ENCODE measurements at regions of chr17 and their contacts with region 1.

Region 1: GRCh38 chr17:68035523-68036303 is at the start of gene KPNA2:
- DNase-seq: peak; percentile 70 to 95 (median 91)
- ATAC-seq: peak; percentile 94
- H3K4me3 ChIP-seq: peak within 1 kb of the TSS; percentile 71
- H3K4me3 Mint-ChIP-seq: peak within 1 kb of the TSS; percentile 83 to 97 (median 91)
- H3K27ac ChIP-seq: peak within 1 kb of the TSS; percentile 91
- H3K27ac Mint-ChIP-seq: peak within 1 kb of the TSS; percentile 83 to 97 (median 92)
- H3K4me1 ChIP-seq: peaks cover 8 to 16% of the 10 kb centered on the region in 2 donors
- H3K4me1 Mint-ChIP-seq: peaks cover 6 to 32% (median 15%) of the 10 kb centered on the region in 7 donors
- H3K27me3 ChIP-seq: no peaks in the 10 kb centered on the region
- H3K27me3 Mint-ChIP-seq: peaks cover 0 to 3% (median 0%) of the 10 kb centered on the region in 5 donors
- total RNA-seq, gene KPNA2: 8.4 to 161 (median 45.9) TPM

Region 2: GRCh38 chr17:67717624-67718329 is 317.9 kb before region 1 on chr17 and contains the start of gene NOL11:
- CTCF ChIA-PET with region 1: no interaction called
- POLR2A ChIA-PET with region 1: no interaction called
- intact Hi-C with region 1: loop called in 1 of 2 experiments (anchors 1 kb)
- DNase-seq: peak; percentile 97 to 100 (median 99)
- ATAC-seq: peak; percentile 98
- H3K4me3 ChIP-seq: peak within 1 kb of the TSS; percentile 96
- H3K4me3 Mint-ChIP-seq: peak within 1 kb of the TSS; percentile 95 to 100 (median 100)
- H3K27ac ChIP-seq: peak within 1 kb of the TSS; percentile 95
- H3K27ac Mint-ChIP-seq: peak within 1 kb of the TSS; percentile 96 to 100 (median 99)
- H3K4me1 ChIP-seq: peaks cover 14 to 20% of the 10 kb centered on the region in 2 donors
- H3K4me1 Mint-ChIP-seq: peaks cover 7 to 47% (median 28%) of the 10 kb centered on the region in 7 donors
- H3K27me3 ChIP-seq: no peaks in the 10 kb centered on the region
- H3K27me3 Mint-ChIP-seq: peaks cover 0 to 5% (median 0%) of the 10 kb centered on the region in 5 donors
- total RNA-seq, gene NOL11: 50.0 to 72.9 (median 65.1) TPM

Region 3: DNA sequence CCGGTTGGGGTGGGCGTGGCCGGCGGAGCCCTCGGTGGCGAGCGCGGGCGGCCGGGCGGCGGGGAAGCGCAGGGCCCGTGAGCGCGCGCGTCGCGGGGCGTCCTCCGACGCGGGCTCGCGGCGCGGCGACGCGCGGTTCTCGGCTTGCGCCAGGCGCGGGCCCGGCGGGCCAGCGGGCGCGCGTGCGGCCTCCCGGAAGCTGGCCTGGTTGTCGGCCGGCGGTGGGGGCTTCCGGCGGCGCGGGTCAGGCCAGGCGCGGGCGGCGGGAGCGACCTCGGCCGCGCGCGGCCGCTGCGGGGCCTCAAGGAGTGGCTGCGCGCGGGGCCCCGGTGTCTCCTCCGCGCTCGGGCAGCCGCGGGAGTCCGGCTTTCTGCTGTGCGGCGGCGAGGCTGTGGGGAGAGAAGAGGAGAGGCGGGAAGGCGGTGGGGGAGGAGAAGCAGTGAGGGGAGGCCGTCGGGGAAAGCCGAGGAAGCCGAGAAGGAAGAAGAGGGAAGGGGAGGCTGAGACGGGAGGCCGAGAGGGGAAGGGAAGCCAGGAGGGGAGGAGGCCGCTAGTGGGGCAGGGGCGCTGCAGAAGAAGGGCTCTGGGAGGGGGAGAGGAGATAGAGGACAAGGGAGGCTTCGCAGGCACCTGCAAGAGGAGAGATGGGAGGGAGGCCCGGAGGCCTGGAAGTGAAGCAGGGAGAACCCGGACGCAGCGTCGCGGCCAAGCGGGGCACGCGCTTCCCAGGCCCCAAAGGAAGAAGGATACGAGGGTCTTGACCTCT is 41.9 kb before region 1 on chr17:
- CTCF ChIA-PET with region 1: no interaction called
- POLR2A ChIA-PET with region 1: interaction called, 3 read pairs
- intact Hi-C with region 1: loop called (anchors 1 kb)
- DNase-seq: peak in 3 of 9 donors; percentile 13 to 29 (median 22)
- ATAC-seq: peak; percentile 89
- H3K4me3 ChIP-seq: peak overlapping the region; percentile 50
- H3K4me3 Mint-ChIP-seq: peak overlapping the region; percentile 74 to 95 (median 86)
- H3K27ac ChIP-seq: peak overlapping the region; percentile 51
- H3K27ac Mint-ChIP-seq: peak overlapping the region in 8 of 9 donors; percentile 38 to 86 (median 54)
- H3K4me1 ChIP-seq: peaks cover 19 to 24% of the 10 kb centered on the region in 2 donors
- H3K4me1 Mint-ChIP-seq: peaks cover 21 to 38% (median 32%) of the 10 kb centered on the region in 7 donors
- H3K27me3 ChIP-seq: peaks cover 0 to 7% of the 10 kb centered on the region in 2 donors
- H3K27me3 Mint-ChIP-seq: peaks cover 5 to 38% (median 21%) of the 10 kb centered on the region in 5 donors

Region 4: DNA sequence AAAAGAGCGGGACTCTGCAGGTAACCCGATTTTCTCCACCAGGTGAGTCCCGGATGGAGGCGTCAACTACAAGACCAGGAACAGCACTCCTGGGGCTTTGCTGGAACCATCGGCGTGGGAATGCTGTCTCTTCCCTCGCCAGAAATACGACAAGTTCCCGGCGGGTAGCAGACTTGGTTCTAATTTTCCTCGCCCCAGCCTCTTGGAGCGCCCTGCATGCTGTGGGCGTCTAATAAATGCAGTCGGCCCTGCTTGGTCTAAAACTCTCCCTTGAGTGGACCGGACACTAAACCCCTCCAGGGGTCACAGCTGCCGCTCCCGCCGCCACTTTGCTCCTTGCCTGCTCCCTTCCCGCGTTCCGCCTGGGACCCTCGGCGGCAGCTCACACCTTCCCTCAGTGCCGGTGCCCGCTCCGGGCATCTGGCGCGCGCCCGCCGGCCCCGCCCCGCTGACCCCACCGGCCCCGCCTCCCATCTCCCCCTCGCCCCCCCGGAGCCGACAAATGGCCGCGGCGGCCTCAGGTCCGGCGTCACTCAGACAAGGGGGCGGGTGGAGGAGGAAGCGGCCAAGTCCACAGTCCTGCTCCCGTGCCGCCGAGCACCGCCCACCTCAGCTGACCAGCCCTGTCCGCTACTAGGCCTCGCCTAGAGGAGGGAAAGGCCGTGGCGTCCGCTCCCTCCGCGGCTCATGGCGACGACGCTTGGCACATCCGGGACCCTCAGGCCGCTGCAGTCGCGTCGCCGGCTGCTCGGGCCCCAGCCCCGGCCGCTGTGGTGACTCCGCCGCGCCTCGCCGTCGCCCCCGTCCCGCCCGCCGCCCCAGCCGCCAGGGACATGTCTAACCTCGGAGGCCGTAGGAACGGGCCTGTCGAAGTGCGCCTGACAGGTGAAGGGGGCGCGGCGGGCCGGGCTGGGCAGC is 65.6 kb after region 1 on chr17:
- CTCF ChIA-PET with region 1: no interaction called
- POLR2A ChIA-PET with region 1: no interaction called
- intact Hi-C with region 1: loop called in 1 of 2 experiments (anchors 1 kb)
- DNase-seq: peak in 8 of 9 donors; percentile 36 to 71 (median 46)
- ATAC-seq: peak; percentile 92
- H3K4me3 ChIP-seq: peak overlapping the region; percentile 75
- H3K4me3 Mint-ChIP-seq: peak overlapping the region; percentile 86 to 99 (median 95)
- H3K27ac ChIP-seq: peak overlapping the region; percentile 85
- H3K27ac Mint-ChIP-seq: peak overlapping the region; percentile 83 to 98 (median 95)
- H3K4me1 ChIP-seq: peaks cover 3 to 20% of the 10 kb centered on the region in 2 donors
- H3K4me1 Mint-ChIP-seq: peaks cover 15 to 42% (median 33%) of the 10 kb centered on the region in 7 donors
- H3K27me3 ChIP-seq: no peaks in the 10 kb centered on the region
- H3K27me3 Mint-ChIP-seq: peaks cover 0 to 12% (median 0%) of the 10 kb centered on the region in 5 donors

Region 5: GRCh38 chr17:68346448-68346847 is 310.7 kb after region 1 on chr17:
- CTCF ChIA-PET with region 1: no interaction called
- POLR2A ChIA-PET with region 1: interaction called, 3 read pairs
- intact Hi-C with region 1: loop called in 1 of 2 experiments (anchors 5 kb)
- DNase-seq: peak; percentile 26 to 66 (median 50)
- ATAC-seq: peak; percentile 79
- H3K4me3 ChIP-seq: peak overlapping the region; percentile 37
- H3K4me3 Mint-ChIP-seq: peak overlapping the region; percentile 68 to 88 (median 81)
- H3K27ac ChIP-seq: peak overlapping the region; percentile 70
- H3K27ac Mint-ChIP-seq: peak overlapping the region; percentile 91 to 98 (median 96)
- H3K4me1 ChIP-seq: peaks cover 68 to 73% of the 10 kb centered on the region in 2 donors
- H3K4me1 Mint-ChIP-seq: peaks cover 58 to 80% (median 76%) of the 10 kb centered on the region in 7 donors
- H3K27me3 ChIP-seq: no peaks in the 10 kb centered on the region
- H3K27me3 Mint-ChIP-seq: no peaks in the 10 kb centered on the region

Region 6: DNA sequence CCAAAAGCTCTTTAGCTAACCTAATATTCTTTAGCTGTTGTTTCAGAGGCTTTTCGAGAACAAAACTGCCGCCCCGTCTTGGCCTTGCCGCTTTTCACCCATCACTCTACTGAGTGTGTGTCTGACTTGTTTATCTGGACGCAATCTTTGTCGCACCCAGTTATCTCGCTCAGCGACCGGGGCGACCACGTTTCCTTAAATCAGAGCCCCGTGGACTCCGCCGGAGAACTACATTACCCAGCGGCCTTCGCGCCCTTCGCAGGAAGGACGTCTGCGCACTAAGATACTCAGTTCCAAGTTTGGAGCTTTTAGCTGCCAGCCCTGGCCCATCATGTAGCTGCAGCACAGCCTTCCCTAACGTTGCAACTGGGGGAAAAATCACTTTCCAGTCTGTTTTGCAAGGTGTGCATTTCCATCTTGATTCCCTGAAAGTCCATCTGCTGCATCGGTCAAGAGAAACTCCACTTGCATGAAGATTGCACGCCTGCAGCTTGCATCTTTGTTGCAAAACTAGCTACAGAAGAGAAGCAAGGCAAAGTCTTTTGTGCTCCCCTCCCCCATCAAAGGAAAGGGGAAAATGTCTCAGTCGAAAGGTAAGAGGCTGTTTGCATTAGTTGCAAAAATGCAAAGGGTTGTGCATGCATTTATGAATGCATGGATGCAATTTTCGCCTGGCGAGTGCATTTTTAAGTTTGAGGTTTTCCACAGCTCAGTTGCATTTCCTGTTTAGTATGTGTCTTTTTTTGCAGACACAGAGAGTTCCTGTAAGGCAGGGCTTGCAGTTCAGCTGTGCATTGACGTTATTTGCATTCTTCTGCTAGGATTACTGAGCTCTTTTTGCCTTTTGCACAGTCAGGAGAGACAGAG is 1378.9 kb after region 1 on chr17 and contains the start of gene MAP2K6:
- CTCF ChIA-PET with region 1: no interaction called
- POLR2A ChIA-PET with region 1: no interaction called
- intact Hi-C with region 1: loop called in 1 of 2 experiments (anchors 5 kb)
- DNase-seq: peak; percentile 53 to 86 (median 81)
- ATAC-seq: peak; percentile 97
- H3K4me3 ChIP-seq: peak within 1 kb of the TSS; percentile 85
- H3K4me3 Mint-ChIP-seq: peak within 1 kb of the TSS in 2 of 10 donors; percentile 10 to 44
- H3K27ac ChIP-seq: peak within 1 kb of the TSS; percentile 52
- H3K27ac Mint-ChIP-seq: peak within 1 kb of the TSS in 2 of 9 donors; percentile 19 to 23
- H3K4me1 ChIP-seq: peaks cover 11 to 32% of the 10 kb centered on the region in 2 donors
- H3K4me1 Mint-ChIP-seq: peaks cover 0 to 18% (median 9%) of the 10 kb centered on the region in 7 donors
- H3K27me3 ChIP-seq: no peaks in the 10 kb centered on the region
- H3K27me3 Mint-ChIP-seq: no peaks in the 10 kb centered on the region
- total RNA-seq, gene MAP2K6: 7.6 to 21.4 (median 18.3) TPM

Measured in naive thymus-derived CD4-positive, alpha-beta T cell (primary cell).